ENCODE measurements at regions of chr11 and their contacts with region 1.

Region 1: DNA sequence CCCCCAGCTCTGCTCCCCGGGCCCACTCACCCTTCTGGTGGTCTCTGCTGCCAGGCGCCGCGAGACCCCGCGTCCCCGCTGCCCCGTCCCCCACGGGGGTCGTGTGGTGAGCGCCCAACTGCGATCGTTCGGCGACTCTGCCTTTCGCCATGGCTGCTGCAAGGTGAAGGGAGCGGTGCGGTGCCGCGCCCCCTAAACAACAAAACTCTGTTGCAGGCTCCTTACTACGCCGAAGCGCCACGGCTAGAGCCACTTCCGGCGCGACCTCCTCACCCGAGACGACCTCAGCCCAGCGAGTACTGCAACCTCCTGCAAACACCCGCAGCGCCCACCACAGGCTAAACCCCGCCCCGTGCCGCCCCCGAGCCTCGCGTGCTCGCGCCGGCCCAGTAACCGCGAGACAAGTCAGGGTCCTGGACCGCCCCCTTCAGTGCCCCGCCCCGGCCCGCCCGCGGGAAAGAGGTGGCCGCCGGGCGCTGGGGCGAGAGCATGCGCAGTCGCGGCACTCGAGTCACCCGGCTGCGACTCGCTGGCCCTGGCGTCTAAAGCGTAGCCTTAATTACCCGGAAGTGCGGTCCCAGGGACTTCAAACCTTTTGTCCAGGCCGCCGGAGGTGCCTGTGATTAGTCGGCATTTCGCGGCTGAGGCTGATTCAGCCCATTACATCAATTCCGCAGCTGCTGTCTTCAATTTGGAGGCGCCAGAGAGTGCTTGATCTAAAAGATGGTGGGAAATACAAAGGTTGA is at the start of gene TMEM41B:
- DNase-seq: peak; percentile 95
- H3K4me3 ChIP-seq: peak within 1 kb of the TSS; percentile 87 to 99
- H3K27ac ChIP-seq: peak within 1 kb of the TSS; percentile 88 to 89
- H3K4me1 ChIP-seq: peaks cover 3% of the 10 kb centered on the region
- H3K27me3 ChIP-seq: no peaks in the 10 kb centered on the region
- CTCF ChIP-seq: peak in 2 of 4 experiments; percentile 18 to 31
- POLR2A ChIP-seq: peak; percentile 94
- total RNA-seq, gene TMEM41B: 29.9 to 54.6 TPM

Region 2: DNA sequence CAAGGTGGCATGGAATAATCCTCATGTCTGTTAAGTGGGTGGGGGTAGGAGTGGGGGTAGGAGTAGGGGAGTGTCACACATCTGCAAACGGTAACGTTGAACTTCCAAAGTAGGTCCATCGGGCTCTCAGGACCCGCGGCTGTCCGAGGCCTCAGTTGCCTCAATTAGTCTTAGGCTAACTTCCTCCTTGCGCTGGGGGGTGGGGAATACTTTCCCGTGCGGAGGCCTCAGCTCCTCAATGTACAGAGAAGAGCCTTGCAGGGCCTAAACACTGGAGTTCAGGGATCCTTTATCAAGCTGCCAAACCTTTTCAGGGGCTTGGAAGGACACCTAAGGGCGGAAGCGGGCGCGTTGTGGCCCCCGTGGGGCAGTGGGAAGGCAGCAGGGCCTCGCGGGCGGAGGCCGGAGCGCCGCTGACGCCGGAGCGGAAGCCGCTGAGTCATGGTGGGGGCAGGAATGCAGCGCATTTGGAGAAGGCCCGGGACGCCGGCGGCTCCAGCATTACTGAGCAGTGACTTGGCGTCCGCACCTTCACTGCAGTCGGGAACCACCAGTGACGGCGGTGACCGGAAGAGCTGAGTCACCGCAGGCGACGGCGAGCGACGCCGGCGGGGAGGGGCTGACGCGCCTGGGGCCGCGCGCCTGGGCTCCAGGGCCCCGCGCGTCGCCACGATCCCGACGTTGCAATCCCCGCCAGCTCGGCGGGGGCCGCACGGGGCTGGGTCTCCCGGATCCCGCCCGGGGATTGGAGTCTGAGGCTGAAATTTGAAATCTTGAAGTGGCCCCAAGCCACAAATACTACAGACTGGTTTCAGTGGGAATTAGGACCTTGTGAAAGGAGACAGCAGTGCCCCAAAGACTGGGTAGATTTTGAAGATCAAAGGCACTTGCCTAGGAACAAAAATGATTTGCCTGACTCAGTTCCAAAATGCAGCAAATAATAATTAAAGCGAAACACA is 49.8 kb after region 1 on chr11:
- intact Hi-C with region 1: loop called (anchors 5 kb)
- DNase-seq: peak; percentile 96
- H3K4me3 ChIP-seq: peak overlapping the region; percentile 36 to 40
- H3K27ac ChIP-seq: peak overlapping the region; percentile 96 to 98
- H3K4me1 ChIP-seq: peaks cover 8% of the 10 kb centered on the region
- H3K27me3 ChIP-seq: no peaks in the 10 kb centered on the region
- CTCF ChIP-seq: peak in 1 of 4 experiments; percentile 19
- POLR2A ChIP-seq: peak; percentile 74

Region 3: DNA sequence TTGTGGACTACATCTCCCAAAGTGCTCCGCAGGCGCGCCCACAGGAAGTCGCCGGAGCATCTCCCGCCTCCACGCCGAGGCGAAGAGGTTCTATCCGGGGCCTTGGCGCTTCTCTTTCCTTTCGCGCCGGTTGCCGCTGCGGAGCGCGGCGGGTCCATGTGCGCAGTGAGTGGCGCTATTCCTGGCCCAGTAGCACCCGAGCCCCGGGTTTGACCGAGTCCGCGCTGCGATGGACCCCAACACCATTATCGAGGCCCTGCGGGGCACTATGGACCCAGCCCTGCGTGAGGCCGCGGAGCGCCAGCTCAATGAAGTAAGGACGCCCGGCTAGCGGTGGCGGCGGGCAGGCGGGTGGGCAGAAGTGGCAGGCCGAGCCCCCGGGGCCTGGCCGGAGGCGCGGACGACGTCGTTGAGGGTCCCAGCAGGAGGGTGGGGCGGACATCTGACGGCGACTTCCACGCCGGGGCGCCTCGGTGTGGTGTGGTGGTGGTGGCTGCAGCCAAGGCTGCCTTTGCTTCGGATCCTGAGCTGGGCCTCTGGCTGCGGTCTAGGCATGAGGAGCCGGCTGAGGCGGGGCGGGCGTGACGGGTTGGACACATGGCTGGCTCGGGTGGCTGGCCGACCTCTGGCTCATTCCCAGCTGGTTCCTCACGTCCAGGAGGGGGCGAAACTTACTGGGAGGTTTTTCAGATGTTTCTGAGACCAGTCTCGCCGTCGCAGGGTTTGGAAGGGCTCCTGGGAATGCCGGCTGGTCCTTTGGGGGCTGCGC is 70.3 kb after region 1 on chr11 and contains the start of gene IPO7:
- intact Hi-C with region 1: loop called (anchors 5 kb)
- DNase-seq: peak; percentile 90
- H3K4me3 ChIP-seq: peak within 1 kb of the TSS; percentile 87 to 94
- H3K27ac ChIP-seq: peak within 1 kb of the TSS; percentile 87 to 93
- H3K4me1 ChIP-seq: peaks cover 3% of the 10 kb centered on the region
- H3K27me3 ChIP-seq: no peaks in the 10 kb centered on the region
- CTCF ChIP-seq: peak in 2 of 4 experiments; percentile 22 to 24
- POLR2A ChIP-seq: peak; percentile 77
- total RNA-seq, gene IPO7: 43.8 to 73.3 TPM

Region 4: GRCh38 chr11:9460322-9461067 is 146.0 kb after region 1 on chr11 and contains the start of gene ZNF143:
- intact Hi-C with region 1: loop called (anchors 10 kb)
- DNase-seq: peak; percentile 100
- H3K4me3 ChIP-seq: peak within 1 kb of the TSS; percentile 82 to 95
- H3K27ac ChIP-seq: peak within 1 kb of the TSS; percentile 99 to 100
- H3K4me1 ChIP-seq: no peaks in the 10 kb centered on the region
- H3K27me3 ChIP-seq: no peaks in the 10 kb centered on the region
- CTCF ChIP-seq: peak in 2 of 4 experiments; percentile 17 to 39
- POLR2A ChIP-seq: peak; percentile 95
- total RNA-seq, gene ZNF143: 15.5 to 41.1 TPM

Region 5: DNA sequence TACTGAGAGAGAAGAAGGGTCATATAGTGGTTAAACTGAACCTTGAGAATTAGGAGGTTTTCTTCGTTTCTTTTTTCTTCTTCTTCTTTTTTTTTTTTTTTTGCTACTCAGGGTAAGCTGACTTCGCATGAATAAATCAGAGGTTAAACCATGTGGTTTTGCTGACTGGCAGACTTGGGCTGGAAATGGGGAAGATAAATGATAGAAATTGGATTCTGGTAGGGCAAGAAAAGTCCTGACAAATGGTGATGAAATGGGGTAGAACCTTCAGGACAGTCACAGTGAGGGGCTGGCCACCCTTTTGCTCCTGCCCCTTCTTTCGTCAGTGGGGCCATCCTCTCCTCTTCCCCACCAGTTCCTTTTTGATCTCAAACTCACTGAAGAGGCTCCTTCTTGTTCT is 347.8 kb after region 1 on chr11:
- intact Hi-C with region 1: no loop called
- DNase-seq: no peak
- H3K4me3 ChIP-seq: no peak overlapping the region
- H3K27ac ChIP-seq: peak overlapping the region in 1 of 2 donors; percentile 95
- H3K4me1 ChIP-seq: no peaks in the 10 kb centered on the region
- H3K27me3 ChIP-seq: no peaks in the 10 kb centered on the region
- CTCF ChIP-seq: no peak
- POLR2A ChIP-seq: no peak